Aorta (tissue), 5 donors: ENCODE measurements at regions of chr1 and their contacts with region 1.

Region 1: DNA sequence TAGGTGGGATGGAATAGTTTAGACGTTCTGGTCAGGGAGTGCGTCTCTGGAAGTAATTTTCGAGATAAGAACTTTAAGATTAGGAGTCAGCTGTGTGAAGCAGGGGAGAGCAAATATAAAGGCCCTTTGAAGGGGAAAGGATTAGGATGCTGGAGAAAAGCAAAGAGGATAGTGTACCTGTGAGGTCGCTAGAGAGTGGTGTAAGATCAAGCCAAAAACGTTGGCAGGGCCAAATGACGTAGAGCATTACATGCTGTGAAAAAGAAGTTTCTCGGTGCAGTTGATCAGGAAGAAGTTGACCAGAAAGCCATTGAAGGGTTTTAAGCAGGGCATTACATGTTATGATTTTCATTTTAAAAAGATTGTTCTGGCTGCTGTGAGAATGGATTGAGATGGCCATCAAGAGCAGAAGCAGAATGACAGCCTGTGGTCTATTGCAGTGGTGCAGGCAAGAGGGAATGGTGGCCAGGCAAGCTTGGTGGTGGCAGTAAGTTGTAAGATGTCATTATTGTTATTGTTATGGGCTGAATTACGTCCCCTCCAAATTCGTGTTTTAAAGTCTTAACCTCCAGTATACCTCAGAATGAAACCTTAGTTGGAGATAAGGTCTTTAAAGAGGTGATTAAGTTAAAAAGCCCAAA is 113.6 kb upstream of the KIF26B start:
- DNase-seq: no peak
- ATAC-seq: no peak
- H3K4me3 ChIP-seq: no peak overlapping the region
- H3K27ac ChIP-seq: no peak overlapping the region
- H3K4me1 ChIP-seq: no peaks in the 10 kb centered on the region
- H3K27me3 ChIP-seq: no peaks in the 10 kb centered on the region

Region 2: GRCh38 chr1:244599937-244600350 is 441.2 kb before region 1 on chr1:
- intact Hi-C with region 1: loop called (anchors 5 kb)
- DNase-seq: peak; percentile 67 to 73
- ATAC-seq: peak; percentile 63
- H3K4me3 ChIP-seq: no peak overlapping the region
- H3K27ac ChIP-seq: no peak overlapping the region
- H3K4me1 ChIP-seq: no peaks in the 10 kb centered on the region
- H3K27me3 ChIP-seq: no peaks in the 10 kb centered on the region

Region 3: GRCh38 chr1:244801246-244801645 is 239.9 kb before region 1 on chr1:
- intact Hi-C with region 1: loop called (anchors 5 kb)
- DNase-seq: no peak
- ATAC-seq: no peak
- H3K4me3 ChIP-seq: no peak overlapping the region
- H3K27ac ChIP-seq: no peak overlapping the region
- H3K4me1 ChIP-seq: no peaks in the 10 kb centered on the region
- H3K27me3 ChIP-seq: no peaks in the 10 kb centered on the region

Region 4: DNA sequence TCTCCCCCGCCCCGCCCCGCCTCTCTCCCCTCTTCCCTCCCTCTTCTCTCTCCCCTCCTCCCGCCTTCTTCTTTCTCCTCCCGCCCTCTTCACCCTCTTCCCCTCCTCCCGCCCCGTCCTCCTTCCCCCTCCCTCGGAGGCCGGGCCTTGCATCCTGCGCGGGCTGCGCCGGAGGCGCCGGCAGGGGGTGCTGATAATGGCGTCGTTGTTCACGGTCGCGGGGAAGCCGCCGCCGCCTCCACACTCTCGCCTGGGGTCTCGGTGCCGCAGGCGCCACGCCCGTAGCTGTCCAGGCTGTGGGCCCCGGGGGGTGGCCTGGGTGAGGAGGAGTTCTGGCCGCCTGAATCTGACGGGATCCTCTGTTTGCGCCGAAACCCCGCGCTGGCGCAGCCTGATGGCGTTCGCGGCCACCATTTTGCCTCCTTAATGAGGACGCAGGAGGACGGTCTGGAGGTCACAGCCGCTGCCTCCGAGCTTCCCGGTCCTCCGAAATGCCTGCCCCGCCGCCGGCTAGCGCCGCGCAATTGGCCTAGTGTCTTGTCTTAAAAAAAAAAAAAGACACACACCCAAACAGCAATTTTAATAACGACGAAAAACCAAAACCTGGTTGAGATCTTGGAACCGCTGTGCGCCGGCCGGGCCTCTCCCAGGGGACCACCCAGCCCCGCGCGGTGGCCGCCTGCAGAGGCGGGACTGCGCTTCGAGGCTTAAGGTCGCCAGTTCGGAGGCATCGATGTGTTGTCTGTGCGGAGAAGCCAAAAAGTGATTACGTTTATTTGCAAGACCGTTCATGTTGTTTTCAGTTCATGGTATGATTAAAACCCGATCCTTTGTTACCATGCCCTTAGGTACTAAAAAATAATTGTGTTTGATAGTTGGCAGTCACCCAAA is 70.3 kb before region 1 on chr1:
- intact Hi-C with region 1: loop called (anchors 5 kb)
- DNase-seq: peak; percentile 96 to 97
- ATAC-seq: peak; percentile 95
- H3K4me3 ChIP-seq: peak overlapping the region; percentile 76 to 94
- H3K27ac ChIP-seq: peak overlapping the region; percentile 97 to 98
- H3K4me1 ChIP-seq: peaks cover 0 to 2% of the 10 kb centered on the region in 2 donors
- H3K27me3 ChIP-seq: no peaks in the 10 kb centered on the region

Region 5: DNA sequence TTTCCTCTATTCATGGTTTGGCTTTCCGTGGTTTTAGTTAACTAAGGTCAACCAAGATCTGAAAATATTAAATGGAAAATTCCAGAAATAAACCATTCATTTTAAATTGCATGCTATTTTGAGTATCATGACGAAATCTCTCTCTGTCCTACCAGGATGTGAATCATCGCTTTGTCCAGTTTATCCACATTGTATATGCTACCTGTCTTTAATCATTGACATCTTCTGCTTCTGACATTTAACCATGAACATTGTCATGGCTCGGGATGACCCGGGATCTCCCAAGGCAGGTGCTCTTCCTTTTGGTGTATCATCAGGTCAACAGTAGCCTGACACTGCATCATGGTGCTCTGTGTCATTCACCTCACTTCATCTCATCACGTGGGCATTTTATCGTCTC is 51.4 kb before region 1 on chr1:
- intact Hi-C with region 1: no loop called
- DNase-seq: no peak
- ATAC-seq: no peak
- H3K4me3 ChIP-seq: no peak overlapping the region
- H3K27ac ChIP-seq: no peak overlapping the region
- H3K4me1 ChIP-seq: no peaks in the 10 kb centered on the region
- H3K27me3 ChIP-seq: no peaks in the 10 kb centered on the region

Region 6: GRCh38 chr1:245418077-245418476 is 376.9 kb after region 1 on chr1:
- intact Hi-C with region 1: no loop called
- DNase-seq: no peak
- ATAC-seq: no peak
- H3K4me3 ChIP-seq: no peak overlapping the region
- H3K27ac ChIP-seq: no peak overlapping the region
- H3K4me1 ChIP-seq: no peaks in the 10 kb centered on the region
- H3K27me3 ChIP-seq: peaks cover 0 to 2% of the 10 kb centered on the region in 2 donors